ENCODE measurements at regions of chr4 and their contacts with region 1.

Region 1: DNA sequence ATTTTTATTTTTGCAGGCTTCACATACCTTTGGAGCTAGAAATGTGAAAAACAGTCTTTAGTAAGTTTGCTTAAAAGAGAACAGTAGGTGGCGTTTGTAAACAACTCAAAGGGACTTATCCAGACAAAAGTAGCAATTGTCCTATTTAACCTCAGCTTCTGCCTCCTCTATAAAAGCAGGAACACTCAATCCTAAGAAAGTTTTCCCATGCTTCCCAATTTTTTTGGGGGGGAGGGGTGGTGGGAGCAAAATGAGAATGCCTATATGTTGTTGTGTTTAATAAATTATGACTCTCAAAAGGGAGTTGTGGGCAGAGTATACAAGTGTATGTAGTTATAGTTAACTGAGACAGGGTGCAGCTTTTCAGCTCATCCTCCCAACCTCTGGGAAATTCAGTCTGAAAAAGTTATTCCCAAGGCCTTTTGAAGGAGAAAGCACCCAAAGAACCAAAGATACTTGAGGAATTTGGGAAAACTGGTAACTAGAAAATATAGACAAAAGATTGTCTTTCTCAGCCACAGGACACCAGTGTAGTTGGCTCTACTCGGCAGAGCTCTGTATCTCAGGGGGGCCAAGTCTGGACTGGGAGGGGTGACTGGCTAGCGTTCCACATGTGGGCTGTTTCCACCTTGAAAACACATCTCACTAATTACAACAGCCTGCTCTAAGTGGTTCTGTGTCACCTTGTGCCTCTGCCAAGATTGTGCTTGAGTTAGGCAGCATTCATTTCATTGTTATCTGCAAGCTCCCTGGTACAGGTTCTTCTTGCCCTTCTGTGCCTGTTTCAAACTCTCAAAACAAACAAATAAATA is 2.8 kb downstream of the SFRP2 start:
- DNase-seq: no peak
- H3K4me3 Mint-ChIP-seq: no peak overlapping the region
- H3K27ac Mint-ChIP-seq: no peak overlapping the region
- H3K4me1 Mint-ChIP-seq: peaks cover 11% of the 10 kb centered on the region
- H3K27me3 Mint-ChIP-seq: peaks cover 79% of the 10 kb centered on the region

Region 2: DNA sequence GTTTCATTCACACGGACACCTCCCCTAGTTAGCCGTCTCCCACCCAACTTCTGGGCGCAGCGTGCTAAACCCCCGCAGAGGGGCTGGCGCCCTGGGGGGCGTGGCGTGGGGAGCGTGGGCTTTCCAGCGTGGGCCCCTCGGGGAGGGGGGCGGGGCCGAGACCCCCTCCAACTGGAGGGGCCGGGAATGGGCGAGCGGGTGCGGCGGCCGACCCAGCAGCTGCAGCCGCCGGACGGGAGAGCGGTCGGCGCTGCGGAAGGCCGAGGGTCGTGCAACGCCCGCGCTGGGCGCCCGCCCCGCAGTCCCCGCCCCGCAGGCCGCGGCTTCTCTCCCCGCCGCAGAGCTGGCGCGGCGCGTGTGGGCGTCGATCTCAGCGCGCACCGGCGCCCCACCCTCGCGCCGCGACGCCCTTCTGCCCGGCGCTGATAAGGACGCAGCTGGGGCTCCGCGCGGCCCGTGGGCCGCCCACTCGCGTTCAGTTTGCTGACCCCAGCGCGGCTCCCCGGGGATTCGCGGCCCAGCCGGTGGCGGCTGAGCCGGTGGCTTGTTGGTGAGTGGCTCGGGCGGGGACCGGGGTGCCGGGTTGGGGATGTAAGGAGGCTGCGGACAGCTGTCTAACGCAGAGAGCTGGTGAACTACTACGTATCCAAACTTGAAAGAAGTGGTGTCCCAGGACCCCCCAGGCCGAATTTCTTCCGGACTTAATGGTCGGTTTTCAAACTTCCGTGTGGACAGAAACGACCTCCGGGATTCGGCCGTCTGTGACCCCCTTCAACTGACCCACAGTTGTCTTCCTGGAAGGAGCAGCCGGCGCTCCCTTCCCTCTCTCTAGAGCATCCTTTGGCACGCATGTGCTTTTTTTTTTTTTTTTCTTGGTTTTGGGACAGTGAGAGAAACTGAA is 848.5 kb before region 1 on chr4:
- intact Hi-C with region 1: loop called (anchors 5 kb)
- DNase-seq: no peak
- H3K4me3 Mint-ChIP-seq: peak overlapping the region; percentile 80
- H3K27ac Mint-ChIP-seq: no peak overlapping the region
- H3K4me1 Mint-ChIP-seq: peaks cover 24% of the 10 kb centered on the region
- H3K27me3 Mint-ChIP-seq: peaks cover 74% of the 10 kb centered on the region

Region 3: GRCh38 chr4:153276971-153277370 is 509.1 kb before region 1 on chr4:
- intact Hi-C with region 1: no loop called
- DNase-seq: no peak
- H3K4me3 Mint-ChIP-seq: no peak overlapping the region
- H3K27ac Mint-ChIP-seq: no peak overlapping the region
- H3K4me1 Mint-ChIP-seq: no peaks in the 10 kb centered on the region
- H3K27me3 Mint-ChIP-seq: no peaks in the 10 kb centered on the region

Region 4: GRCh38 chr4:153940916-153941315 is 154.8 kb after region 1 on chr4:
- intact Hi-C with region 1: loop called (anchors 10 kb)
- DNase-seq: no peak
- H3K4me3 Mint-ChIP-seq: no peak overlapping the region
- H3K27ac Mint-ChIP-seq: no peak overlapping the region
- H3K4me1 Mint-ChIP-seq: no peaks in the 10 kb centered on the region
- H3K27me3 Mint-ChIP-seq: peaks cover 10% of the 10 kb centered on the region